PC-9 (cell line): ENCODE measurements at regions of chr5 and their contacts with region 1.

Region 1: GRCh38 chr5:139633295-139634027 is 14.7 kb upstream of the CXXC5 start:
- DNase-seq: peak; percentile 58 to 61
- H3K4me3 ChIP-seq: no peak overlapping the region
- H3K27ac ChIP-seq: no peak overlapping the region
- H3K4me1 ChIP-seq: peaks cover 30% of the 10 kb centered on the region
- H3K27me3 ChIP-seq: no peaks in the 10 kb centered on the region
- CTCF ChIP-seq: peak; percentile 98

Region 2: GRCh38 chr5:139410993-139411828 is 222.2 kb before region 1 on chr5:
- CTCF ChIA-PET with region 1: no interaction called
- POLR2A ChIA-PET with region 1: no interaction called
- intact Hi-C with region 1: loop called (anchors 2 kb)
- DNase-seq: no peak
- H3K4me3 ChIP-seq: no peak overlapping the region
- H3K27ac ChIP-seq: no peak overlapping the region
- H3K4me1 ChIP-seq: no peaks in the 10 kb centered on the region
- H3K27me3 ChIP-seq: no peaks in the 10 kb centered on the region
- CTCF ChIP-seq: no peak

Region 3: GRCh38 chr5:139517683-139518564 is 115.5 kb before region 1 on chr5:
- CTCF ChIA-PET with region 1: no interaction called
- POLR2A ChIA-PET with region 1: no interaction called
- intact Hi-C with region 1: loop called (anchors 1 kb)
- DNase-seq: peak; percentile 57 to 89
- H3K4me3 ChIP-seq: peak overlapping the region; percentile 60
- H3K27ac ChIP-seq: no peak overlapping the region
- H3K4me1 ChIP-seq: no peaks in the 10 kb centered on the region
- H3K27me3 ChIP-seq: no peaks in the 10 kb centered on the region
- CTCF ChIP-seq: peak; percentile 93

Region 4: GRCh38 chr5:139660923-139661814 is 27.7 kb after region 1 on chr5:
- CTCF ChIA-PET with region 1: interaction called, 6 read pairs
- POLR2A ChIA-PET with region 1: interaction called, 3 read pairs
- intact Hi-C with region 1: loop called (anchors 1 kb)
- DNase-seq: peak; percentile 87 to 90
- H3K4me3 ChIP-seq: peak overlapping the region; percentile 52; the same call in 1 of the 2 replicates
- H3K27ac ChIP-seq: peak overlapping the region; percentile 78
- H3K4me1 ChIP-seq: peaks cover 78% of the 10 kb centered on the region
- H3K27me3 ChIP-seq: no peaks in the 10 kb centered on the region
- CTCF ChIP-seq: no peak

Region 5: GRCh38 chr5:139765409-139766217 is 132.2 kb after region 1 on chr5:
- CTCF ChIA-PET with region 1: interaction called, 16 read pairs
- POLR2A ChIA-PET with region 1: no interaction called
- intact Hi-C with region 1: loop called (anchors 1 kb)
- DNase-seq: peak in 1 of 2 experiments; percentile 80
- H3K4me3 ChIP-seq: peak overlapping the region; percentile 73
- H3K27ac ChIP-seq: no peak overlapping the region
- H3K4me1 ChIP-seq: peaks cover 18% of the 10 kb centered on the region
- H3K27me3 ChIP-seq: no peaks in the 10 kb centered on the region
- CTCF ChIP-seq: peak; percentile 99

Region 6: DNA sequence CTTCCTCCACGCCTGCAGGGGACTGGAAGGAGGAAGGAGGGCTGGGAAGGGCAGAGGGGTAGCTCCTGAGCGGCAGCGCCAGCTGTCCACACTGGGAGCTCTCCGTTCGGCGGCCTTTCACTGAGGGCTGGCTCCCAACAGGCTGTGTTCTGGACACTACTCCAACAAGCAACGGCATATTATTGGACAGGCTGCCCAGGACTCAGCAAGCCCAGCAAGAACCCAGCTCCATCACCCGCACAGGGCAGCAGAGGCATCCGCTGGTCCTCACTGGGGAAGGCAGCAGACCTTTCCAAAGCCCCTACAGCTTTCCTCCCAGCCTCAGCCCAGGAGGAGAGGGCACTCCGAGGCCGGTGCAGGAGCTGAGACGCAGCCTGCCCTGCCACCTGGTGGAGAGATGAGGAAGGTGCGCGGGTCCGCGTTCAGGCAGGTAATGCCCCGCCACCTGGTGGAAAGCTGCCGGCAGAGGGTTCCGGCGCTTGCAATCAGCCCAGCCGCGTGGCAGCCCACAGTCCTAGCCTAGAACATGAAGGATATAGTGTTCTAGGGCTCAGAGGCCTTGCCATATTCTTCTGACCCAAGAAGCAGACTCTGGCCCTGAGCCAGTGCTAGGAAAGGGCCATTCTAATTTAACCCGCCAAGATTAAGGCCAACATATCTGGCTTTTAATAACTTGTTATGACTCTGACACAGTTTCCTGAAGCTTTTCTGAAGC is 335.2 kb after region 1 on chr5:
- CTCF ChIA-PET with region 1: interaction called, 4 read pairs
- POLR2A ChIA-PET with region 1: no interaction called
- intact Hi-C with region 1: loop called (anchors 2 kb)
- DNase-seq: peak; percentile 57 to 90
- H3K4me3 ChIP-seq: no peak overlapping the region
- H3K27ac ChIP-seq: no peak overlapping the region
- H3K4me1 ChIP-seq: no peaks in the 10 kb centered on the region
- H3K27me3 ChIP-seq: no peaks in the 10 kb centered on the region
- CTCF ChIP-seq: peak; percentile 97